ENCODE measurements at regions of chr1 and their contacts with region 1.

Region 1: DNA sequence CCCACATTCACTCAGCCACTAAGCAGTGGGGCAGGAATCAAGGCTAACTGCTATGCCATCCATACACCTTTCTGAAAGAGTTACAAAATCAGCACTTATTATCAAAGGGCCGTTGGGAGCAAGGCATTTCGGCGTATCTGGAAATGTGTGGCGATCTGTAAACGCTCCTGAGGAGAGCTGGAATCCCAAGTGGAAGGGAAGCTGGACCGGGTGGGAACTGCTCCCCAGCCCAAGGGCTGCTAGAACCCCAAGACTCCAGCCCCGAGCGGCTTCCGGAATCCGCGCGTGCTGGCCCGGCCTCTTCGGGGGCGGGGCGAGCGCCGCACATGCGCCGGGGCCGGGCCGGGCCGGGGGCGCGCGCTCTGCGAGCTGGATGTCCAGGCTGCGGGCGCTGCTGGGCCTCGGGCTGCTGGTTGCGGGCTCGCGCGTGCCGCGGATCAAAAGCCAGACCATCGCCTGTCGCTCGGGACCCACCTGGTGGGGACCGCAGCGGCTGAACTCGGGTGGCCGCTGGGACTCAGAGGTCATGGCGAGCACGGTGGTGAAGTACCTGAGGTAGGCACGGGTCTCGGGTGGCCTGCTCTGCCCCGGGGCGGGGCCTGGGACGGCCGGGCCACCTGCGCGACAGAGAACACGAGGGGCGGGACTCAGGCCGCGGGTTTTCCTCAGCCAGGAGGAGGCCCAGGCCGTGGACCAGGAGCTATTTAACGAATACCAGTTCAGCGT is at the start of gene NAXE:
- DNase-seq: peak; percentile 69 to 73
- ATAC-seq: peak; percentile 94 to 97 (median 96)
- H3K4me3 ChIP-seq: peak within 1 kb of the TSS; percentile 59 to 97 (median 81)
- H3K27ac ChIP-seq: peak within 1 kb of the TSS; percentile 74 to 92 (median 86)
- H3K4me1 ChIP-seq: peaks cover 3 to 19% (median 13%) of the 10 kb centered on the region in 9 donors
- H3K27me3 ChIP-seq: no peaks in the 10 kb centered on the region
- CTCF ChIP-seq: no peak
- total RNA-seq, gene NAXE: 93.1 to 134 (median 112) TPM

Region 2: GRCh38 chr1:156451505-156452160 is 140.0 kb before region 1 on chr1:
- intact Hi-C with region 1: loop called in 2 of 10 experiments (anchors 5 kb)
- DNase-seq: no peak
- ATAC-seq: no peak
- H3K4me3 ChIP-seq: no peak overlapping the region
- H3K27ac ChIP-seq: no peak overlapping the region
- H3K4me1 ChIP-seq: peaks cover 0 to 14% (median 5%) of the 10 kb centered on the region in 9 donors
- H3K27me3 ChIP-seq: peaks cover 0 to 5% (median 0%) of the 10 kb centered on the region in 7 donors
- CTCF ChIP-seq: no peak

Region 3: GRCh38 chr1:156480411-156481192 is 111.0 kb before region 1 on chr1:
- intact Hi-C with region 1: loop called in 1 of 10 experiments (anchors 10 kb)
- DNase-seq: peak; percentile 65 to 71
- ATAC-seq: peak; percentile 7 to 60 (median 37)
- H3K4me3 ChIP-seq: no peak overlapping the region
- H3K27ac ChIP-seq: peak overlapping the region in 9 of 10 donors; percentile 27 to 92 (median 73)
- H3K4me1 ChIP-seq: peaks cover 48 to 100% (median 94%) of the 10 kb centered on the region in 9 donors
- H3K27me3 ChIP-seq: no peaks in the 10 kb centered on the region
- CTCF ChIP-seq: peak; percentile 23 to 84 (median 67)

Region 4: GRCh38 chr1:156490401-156491032 is 101.1 kb before region 1 on chr1:
- intact Hi-C with region 1: loop called in 2 of 10 experiments (anchors 5 to 10 kb)
- DNase-seq: peak; percentile 63 to 82
- ATAC-seq: peak; percentile 61 to 84 (median 80)
- H3K4me3 ChIP-seq: peak overlapping the region in 9 of 10 donors; percentile 6 to 39 (median 35)
- H3K27ac ChIP-seq: peak overlapping the region; percentile 80 to 100 (median 97)
- H3K4me1 ChIP-seq: peaks cover 81 to 100% (median 99%) of the 10 kb centered on the region in 9 donors
- H3K27me3 ChIP-seq: no peaks in the 10 kb centered on the region
- CTCF ChIP-seq: peak in 4 of 9 donors; percentile 29 to 42 (median 30)

Region 5: GRCh38 chr1:156571949-156572662 is 19.5 kb before region 1 on chr1 and contains the start of gene IQGAP3:
- intact Hi-C with region 1: no loop called
- DNase-seq: peak; percentile 81 to 90
- ATAC-seq: peak; percentile 88 to 97 (median 95)
- H3K4me3 ChIP-seq: peak within 1 kb of the TSS in 9 of 10 donors; percentile 24 to 62 (median 53)
- H3K27ac ChIP-seq: peak within 1 kb of the TSS in 1 of 10 donors; percentile 31
- H3K4me1 ChIP-seq: peaks cover 0 to 18% (median 13%) of the 10 kb centered on the region in 9 donors
- H3K27me3 ChIP-seq: peaks cover 0 to 4% (median 0%) of the 10 kb centered on the region in 7 donors
- CTCF ChIP-seq: no peak
- total RNA-seq, gene IQGAP3: 0.07 to 3.8 (median 0.39) TPM

Region 6: GRCh38 chr1:156641761-156642264 is 50.2 kb after region 1 on chr1 and contains the start of gene BCAN:
- intact Hi-C with region 1: no loop called
- DNase-seq: peak in 1 of 2 donors; percentile 45
- ATAC-seq: peak; percentile 45 to 85 (median 69)
- H3K4me3 ChIP-seq: peak within 1 kb of the TSS in 9 of 10 donors; percentile 18 to 62 (median 44)
- H3K27ac ChIP-seq: no peak within 1 kb of the TSS
- H3K4me1 ChIP-seq: peaks cover 6 to 20% (median 15%) of the 10 kb centered on the region in 9 donors
- H3K27me3 ChIP-seq: peaks cover 6 to 100% (median 88%) of the 10 kb centered on the region in 7 donors
- CTCF ChIP-seq: no peak
- total RNA-seq, gene BCAN: 0.14 to 0.52 (median 0.24) TPM in 6 of 10 donors, not detected in the others

Measured in heart right ventricle (tissue), 16 donors.